ENCODE measurements at regions of chr14 and their contacts with region 1.

Region 1: DNA sequence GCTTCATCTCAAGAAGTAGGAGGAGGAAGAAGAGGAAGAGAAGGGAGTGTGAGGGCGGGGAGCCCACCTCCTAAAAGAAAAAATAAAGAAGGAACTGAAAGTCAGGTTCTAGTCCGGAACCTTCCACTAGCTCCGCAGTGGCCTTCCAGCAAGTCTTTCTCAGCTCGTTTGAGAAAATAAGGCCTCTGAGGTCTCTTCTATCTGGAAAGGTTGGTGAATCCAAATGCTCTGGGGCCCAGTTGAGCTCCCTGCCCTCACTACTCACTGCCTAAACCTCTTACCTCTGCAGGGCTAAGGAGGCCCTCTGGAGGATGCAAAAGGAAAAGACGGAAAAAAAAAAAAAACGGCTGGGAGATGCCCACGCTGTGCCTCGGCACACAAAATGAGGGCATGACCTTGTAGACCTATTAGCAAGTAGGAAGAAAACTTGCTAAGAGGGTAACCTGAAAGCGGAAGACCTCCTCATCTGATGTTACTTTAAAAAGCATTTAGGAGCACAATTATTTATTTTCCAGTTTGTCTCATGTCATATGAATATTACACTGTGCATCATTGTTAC is 35.9 kb downstream of the FBLN5 start:
- DNase-seq: peak; percentile 62
- ATAC-seq: peak; percentile 76
- H3K4me3 Mint-ChIP-seq: no peak overlapping the region
- H3K27ac Mint-ChIP-seq: peak overlapping the region; percentile 27
- H3K4me1 Mint-ChIP-seq: peaks cover 22% of the 10 kb centered on the region
- H3K27me3 Mint-ChIP-seq: peaks cover 3% of the 10 kb centered on the region

Region 2: DNA sequence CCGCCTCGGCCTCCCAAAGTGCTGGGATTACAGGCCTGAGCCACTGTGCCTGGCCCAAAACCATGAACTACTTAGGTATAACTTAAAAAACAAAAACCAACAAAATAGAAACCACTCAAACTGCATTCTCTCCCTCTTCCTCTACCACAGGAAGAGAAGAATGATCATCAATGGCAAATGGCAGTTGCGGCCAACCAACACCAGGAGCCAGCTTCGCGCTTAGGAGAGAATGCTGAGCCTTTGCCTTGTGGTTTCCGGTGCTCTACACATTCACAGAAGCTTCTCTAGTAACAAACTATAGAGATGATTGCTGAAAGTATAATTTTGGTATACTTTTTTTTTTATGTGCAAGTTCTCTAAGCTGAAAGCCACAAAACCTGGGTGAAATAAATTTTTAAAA is 196.7 kb before region 1 on chr14:
- CTCF ChIA-PET with region 1: interaction called, 14 read pairs
- POLR2A ChIA-PET with region 1: no interaction called
- DNase-seq: peak; percentile 84
- ATAC-seq: peak; percentile 99
- H3K4me3 Mint-ChIP-seq: peak overlapping the region; percentile 60
- H3K27ac Mint-ChIP-seq: peak overlapping the region; percentile 93
- H3K4me1 Mint-ChIP-seq: peaks cover 25% of the 10 kb centered on the region
- H3K27me3 Mint-ChIP-seq: no peaks in the 10 kb centered on the region

Region 3: DNA sequence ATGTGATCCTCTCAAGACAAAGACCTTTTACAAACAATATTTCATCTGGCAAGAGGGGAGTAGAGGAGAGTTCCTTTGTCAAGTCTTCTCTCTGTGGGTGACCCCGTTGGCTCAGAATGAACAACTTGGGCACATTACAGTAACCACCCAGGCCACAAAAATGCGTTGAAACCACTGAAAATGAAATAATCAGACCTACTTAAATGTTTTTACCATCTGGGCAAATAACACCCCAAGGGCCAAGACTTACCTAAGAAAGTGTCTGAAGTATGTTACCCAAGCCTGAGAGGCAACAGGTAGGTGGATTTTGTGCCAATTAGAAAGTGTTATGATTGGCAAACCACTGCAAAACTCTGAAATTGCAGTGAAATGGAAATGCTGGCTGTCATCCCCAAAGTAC is 45.5 kb before region 1 on chr14:
- CTCF ChIA-PET with region 1: interaction called, 24 read pairs
- POLR2A ChIA-PET with region 1: interaction called, 3 read pairs
- DNase-seq: peak; percentile 67
- ATAC-seq: peak; percentile 6
- H3K4me3 Mint-ChIP-seq: peak overlapping the region; percentile 94
- H3K27ac Mint-ChIP-seq: peak overlapping the region; percentile 96
- H3K4me1 Mint-ChIP-seq: peaks cover 91% of the 10 kb centered on the region
- H3K27me3 Mint-ChIP-seq: no peaks in the 10 kb centered on the region

Region 4: DNA sequence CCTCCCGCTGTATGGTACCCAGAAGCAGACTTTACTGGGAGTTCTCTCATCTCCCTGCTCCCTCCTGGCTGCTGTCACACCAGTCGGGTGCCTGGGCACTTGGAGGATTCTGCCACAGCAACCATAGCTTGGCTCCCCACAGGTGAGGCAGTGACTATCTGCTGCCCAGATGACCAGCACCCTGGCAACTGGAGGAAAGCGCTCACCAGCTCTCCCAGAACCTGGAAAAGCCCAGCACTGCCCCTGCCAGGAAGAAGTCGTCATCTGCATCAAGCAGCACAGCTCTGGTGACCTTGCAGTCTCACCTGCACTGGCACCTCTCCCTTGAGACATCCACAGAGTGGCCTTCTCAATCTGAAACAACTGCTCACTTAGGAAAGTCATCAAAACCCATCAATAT is 12.3 kb before region 1 on chr14:
- CTCF ChIA-PET with region 1: interaction called, 10 read pairs
- POLR2A ChIA-PET with region 1: interaction called, 3 read pairs
- DNase-seq: peak; percentile 49
- ATAC-seq: peak; percentile 44
- H3K4me3 Mint-ChIP-seq: no peak overlapping the region
- H3K27ac Mint-ChIP-seq: peak overlapping the region; percentile 40
- H3K4me1 Mint-ChIP-seq: peaks cover 13% of the 10 kb centered on the region
- H3K27me3 Mint-ChIP-seq: peaks cover 7% of the 10 kb centered on the region

Region 5: GRCh38 chr14:91953170-91953985 is 41.8 kb after region 1 on chr14:
- CTCF ChIA-PET with region 1: no interaction called
- POLR2A ChIA-PET with region 1: no interaction called
- DNase-seq: no peak
- ATAC-seq: no peak
- H3K4me3 Mint-ChIP-seq: no peak overlapping the region
- H3K27ac Mint-ChIP-seq: no peak overlapping the region
- H3K4me1 Mint-ChIP-seq: no peaks in the 10 kb centered on the region
- H3K27me3 Mint-ChIP-seq: peaks cover 32% of the 10 kb centered on the region